Endothelial cell of umbilical vein (primary cell): ENCODE measurements at regions of chr1 and their contacts with region 1.

Region 1: DNA sequence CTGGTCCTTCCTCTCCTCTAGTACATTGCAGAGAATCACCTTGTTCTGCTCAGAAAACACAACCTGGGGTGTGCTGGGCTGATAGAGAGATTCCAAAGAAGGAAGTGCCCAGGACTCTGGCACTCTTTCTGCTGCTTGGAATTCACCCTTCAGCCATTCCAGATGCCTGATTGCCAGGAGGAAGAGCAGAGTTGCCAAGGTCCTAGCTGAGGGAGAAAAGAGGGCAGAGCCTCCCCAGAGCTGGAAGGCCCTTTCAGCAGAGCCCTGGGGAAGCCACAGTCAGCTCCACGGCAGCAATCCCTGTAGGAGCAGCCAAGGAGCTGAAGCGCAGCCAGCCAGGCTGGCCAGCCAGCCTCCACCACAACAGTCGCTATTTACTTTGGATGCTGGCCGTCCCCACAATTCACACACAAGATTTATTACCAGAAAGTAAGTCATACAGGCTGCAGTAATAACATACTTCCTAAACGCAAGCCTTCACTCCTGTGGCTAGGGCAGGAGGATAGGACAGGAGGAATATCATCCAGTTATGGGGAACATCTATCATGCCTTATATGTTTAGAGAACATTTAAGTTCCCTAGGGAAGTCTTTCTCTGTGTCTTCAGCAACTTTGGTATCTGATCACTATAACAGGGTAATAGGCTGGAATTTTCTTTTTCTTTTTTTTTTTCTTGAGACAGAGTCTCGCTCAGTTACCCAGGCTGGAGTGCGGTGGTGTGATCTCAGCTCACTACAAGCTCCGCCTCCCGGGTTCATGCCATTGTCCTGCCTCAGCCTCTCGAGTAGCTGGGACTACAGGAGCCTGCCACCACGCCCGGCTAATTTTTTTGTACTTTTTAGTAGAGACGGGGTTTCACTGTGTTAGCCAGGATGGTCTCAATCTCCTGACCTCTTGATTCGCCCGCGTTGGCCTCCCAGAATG is 36.6 kb upstream of the SLC44A3 start:
- DNase-seq: peak; percentile 94
- H3K4me3 ChIP-seq: no peak overlapping the region
- H3K27ac ChIP-seq: peak overlapping the region; percentile 64
- H3K4me1 ChIP-seq: peaks cover 16% of the 10 kb centered on the region
- H3K27me3 ChIP-seq: peaks cover 0 to 4% of the 10 kb centered on the region in 2 experiments
- CTCF ChIP-seq: no peak
- POLR2A ChIP-seq: peak; percentile 15

Region 2: DNA sequence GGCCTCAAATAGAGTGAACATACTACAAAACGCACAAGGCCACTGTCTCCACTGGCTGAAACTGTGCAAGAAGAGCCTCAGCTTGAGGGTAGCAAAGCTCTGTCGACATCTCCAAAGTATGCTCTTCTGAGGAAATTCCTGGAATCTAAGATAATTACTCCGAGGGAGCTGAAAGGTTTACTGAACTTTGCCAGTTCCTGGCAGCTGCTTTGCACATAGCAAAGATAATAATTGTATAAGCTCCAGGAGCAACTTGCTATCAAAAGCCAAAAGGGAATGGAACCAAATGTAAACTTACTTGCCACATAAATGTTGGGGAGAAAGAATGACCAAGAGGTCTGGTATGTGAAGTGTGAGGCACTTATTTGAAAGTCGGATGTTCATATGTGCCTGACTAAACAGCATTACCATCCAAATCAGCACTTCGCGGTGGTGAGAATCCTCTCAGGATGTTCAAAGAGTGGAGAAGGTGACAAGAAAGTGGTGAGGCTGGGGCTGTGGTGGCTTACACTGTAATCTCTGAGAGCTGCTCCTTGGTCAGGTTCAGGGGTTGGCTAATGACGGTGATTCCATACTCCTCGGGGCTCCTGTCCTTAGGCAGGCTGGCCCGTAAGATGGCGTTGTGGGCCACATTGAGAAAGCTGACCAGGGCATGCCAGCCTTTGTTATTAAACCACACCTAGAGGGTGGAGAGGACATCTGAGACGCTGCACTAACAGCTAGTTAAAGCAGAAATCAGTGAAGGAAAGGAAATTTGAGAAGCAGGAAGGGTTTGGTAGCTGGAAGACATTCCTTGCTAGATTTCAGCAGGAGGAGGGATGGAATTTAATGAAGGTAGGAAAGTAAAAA is 762.6 kb before region 1 on chr1:
- CTCF ChIA-PET with region 1: no interaction called
- POLR2A ChIA-PET with region 1: no interaction called
- dilution Hi-C with region 1: no loop called
- intact Hi-C with region 1: no loop called
- DNase-seq: peak; percentile 83
- H3K4me3 ChIP-seq: no peak overlapping the region
- H3K27ac ChIP-seq: peak overlapping the region; percentile 55
- H3K4me1 ChIP-seq: peaks cover 26% of the 10 kb centered on the region
- H3K27me3 ChIP-seq: no peaks in the 10 kb centered on the region
- CTCF ChIP-seq: no peak
- POLR2A ChIP-seq: no peak

Region 3: DNA sequence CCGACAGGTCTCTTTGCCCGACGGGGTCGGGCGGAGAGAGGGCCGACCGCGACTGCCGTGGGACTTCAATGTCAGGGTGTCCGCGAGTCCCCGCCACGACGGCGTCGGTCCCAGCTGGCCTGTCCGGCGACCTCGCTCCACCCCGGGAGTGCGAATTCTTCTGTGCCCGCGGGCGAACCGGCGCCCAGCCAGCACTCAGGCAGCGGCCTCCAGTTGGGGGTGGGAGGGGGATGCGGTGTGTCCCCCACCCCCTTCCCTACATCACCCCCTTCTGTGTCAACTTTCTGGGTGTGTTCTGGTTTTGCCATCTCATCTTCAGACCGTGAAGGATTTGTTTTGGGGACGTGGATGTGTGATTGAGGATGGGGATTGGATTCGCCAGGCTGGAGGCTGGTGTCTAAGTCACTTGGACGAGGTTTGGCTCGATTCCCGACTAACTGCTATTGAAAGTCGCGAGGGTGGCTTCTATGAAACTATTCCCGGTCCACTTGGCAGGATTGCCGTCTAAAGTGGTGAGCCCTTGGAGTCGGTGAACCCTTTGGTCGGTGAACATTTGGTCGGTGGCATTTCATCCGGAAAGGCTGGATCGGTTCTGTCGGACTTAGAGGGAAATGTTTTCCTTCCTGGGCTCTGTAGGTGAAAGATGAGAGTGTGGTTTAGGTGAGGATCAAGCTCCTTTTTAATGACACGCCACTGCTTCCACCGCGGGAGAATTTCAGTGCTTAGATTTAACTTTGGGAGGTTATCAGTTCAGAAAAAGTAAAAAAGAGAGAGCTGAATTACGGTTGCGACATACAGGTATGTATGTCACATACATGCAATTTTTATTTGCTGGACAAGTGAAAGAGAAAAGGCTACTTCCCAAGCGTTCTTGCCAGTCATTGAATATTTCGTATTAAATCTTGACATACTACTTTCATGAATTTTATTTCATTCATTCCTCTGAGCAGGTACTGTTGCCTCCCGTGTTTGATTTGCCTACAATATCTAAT is 364.6 kb before region 1 on chr1:
- CTCF ChIA-PET with region 1: no interaction called
- POLR2A ChIA-PET with region 1: no interaction called
- dilution Hi-C with region 1: no loop called
- intact Hi-C with region 1: no loop called
- DNase-seq: peak; percentile 69
- H3K4me3 ChIP-seq: peak overlapping the region; percentile 56 to 87 (median 75)
- H3K27ac ChIP-seq: no peak overlapping the region
- H3K4me1 ChIP-seq: peaks cover 27% of the 10 kb centered on the region
- H3K27me3 ChIP-seq: peaks cover 0 to under 1% of the 10 kb centered on the region in 2 experiments
- CTCF ChIP-seq: no peak
- POLR2A ChIP-seq: no peak

Region 4: DNA sequence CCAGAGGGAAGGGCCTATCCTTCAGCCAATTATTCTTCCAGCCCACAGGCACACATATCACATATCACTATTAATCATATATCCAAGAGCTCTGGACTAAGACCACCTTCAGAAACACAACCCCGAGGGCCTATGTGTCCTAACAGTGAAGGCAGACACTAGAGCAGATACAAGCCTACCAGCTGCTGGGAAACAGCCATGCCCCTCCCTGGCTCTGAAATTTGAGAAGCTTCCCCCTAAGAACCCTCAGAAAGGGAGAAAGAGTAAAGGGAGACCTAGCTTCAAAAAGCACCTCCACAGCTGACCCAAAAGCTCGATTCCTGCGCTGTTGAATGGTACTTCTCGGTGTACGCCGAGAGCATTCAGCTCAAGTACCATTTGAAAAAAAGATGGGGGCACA is 125.9 kb after region 1 on chr1:
- CTCF ChIA-PET with region 1: no interaction called
- POLR2A ChIA-PET with region 1: no interaction called
- dilution Hi-C with region 1: no loop called
- intact Hi-C with region 1: loop called (anchors 1 kb)
- DNase-seq: no peak
- H3K4me3 ChIP-seq: no peak overlapping the region
- H3K27ac ChIP-seq: no peak overlapping the region
- H3K4me1 ChIP-seq: peaks cover under 1% of the 10 kb centered on the region
- H3K27me3 ChIP-seq: no peaks in the 10 kb centered on the region
- CTCF ChIP-seq: no peak
- POLR2A ChIP-seq: no peak